Aorta (tissue), 5 donors: ENCODE measurements at regions of chr11 and their contacts with region 1.

Region 1: DNA sequence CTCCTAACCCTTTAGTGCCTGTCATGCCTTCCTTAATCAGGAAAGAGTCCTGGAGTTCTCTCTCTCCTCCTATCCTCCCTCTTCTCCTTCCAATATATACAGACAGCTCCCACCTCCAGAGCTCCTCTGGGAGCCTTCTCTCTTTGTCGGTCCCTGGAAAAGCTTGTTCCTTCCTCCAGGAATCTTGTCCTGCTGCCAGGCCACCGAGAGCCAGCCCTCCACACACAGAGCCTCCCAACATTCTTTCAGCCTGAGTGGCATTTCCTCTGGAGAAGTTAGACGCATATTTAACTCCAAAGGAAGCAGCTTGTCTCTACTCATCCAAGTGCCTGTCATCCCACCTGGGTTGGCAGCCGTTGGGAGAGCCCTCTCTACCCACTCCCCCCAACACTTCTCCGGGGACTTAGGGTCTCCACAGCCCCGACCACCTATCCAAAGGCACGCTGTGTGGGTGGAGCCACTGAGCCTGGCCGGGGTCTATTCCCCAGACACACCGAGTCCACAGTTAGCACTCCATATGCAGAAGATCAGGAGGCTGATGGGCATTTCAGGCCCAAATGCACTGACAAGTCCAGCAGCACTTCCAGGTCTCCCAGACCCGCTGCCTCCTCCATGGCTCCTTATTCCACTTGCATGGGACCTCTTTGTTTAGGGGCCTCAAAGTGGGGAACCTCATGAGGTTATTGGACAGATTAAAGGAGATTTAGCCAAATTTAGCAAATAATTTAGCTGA is 31.1 kb downstream of the DKK3 start:
- DNase-seq: peak; percentile 87 to 91
- ATAC-seq: peak; percentile 36
- H3K4me3 ChIP-seq: no peak overlapping the region
- H3K27ac ChIP-seq: peak overlapping the region; percentile 57 to 83
- H3K4me1 ChIP-seq: peaks cover 0 to 16% of the 10 kb centered on the region in 2 donors
- H3K27me3 ChIP-seq: no peaks in the 10 kb centered on the region

Region 2: DNA sequence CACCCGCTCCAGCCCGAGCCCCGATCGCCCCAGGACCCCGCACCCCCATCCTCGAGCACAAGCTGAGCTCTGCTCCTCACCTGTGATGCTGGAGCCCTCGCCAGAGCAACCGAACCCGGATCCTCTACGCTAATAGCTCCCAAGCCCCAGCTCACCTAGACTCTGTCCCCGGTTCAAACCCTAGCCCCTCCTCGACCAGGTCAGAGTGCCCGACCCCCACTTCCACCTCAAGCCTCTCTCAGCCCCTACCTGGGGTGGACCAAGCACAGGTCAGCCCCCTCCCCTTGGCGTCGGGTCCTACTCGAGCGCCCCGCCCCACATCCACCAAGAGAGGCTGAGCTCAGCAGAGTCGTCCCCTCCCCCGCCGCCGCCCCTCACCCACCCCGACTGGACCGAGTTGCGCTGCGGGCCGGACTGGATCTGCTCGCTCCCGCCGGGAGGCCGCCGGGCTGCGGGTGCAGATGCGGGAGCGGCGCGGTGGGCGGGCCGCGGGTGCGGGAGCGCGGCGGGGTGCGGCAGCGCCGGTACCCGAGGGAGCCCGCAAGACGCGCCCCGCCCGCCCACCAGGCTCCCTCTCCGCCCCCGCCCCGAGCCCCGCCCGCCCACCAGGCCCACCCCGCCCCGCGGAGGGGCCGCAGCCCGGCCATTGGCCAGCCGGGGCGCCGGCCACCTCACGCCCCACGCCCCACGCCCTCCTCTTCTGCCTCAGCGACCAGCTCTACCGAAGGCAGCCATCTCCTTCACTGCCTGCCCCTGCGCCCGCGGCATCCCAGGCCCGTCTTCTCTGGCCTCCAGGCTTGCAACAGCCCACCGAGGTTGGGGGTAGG is 31.6 kb after region 1 on chr11:
- intact Hi-C with region 1: loop called (anchors 2 to 5 kb)
- DNase-seq: peak; percentile 78 to 85
- ATAC-seq: peak; percentile 64
- H3K4me3 ChIP-seq: peak overlapping the region; percentile 75 to 80
- H3K27ac ChIP-seq: peak overlapping the region; percentile 62 to 71
- H3K4me1 ChIP-seq: peaks cover 0 to 6% of the 10 kb centered on the region in 2 donors
- H3K27me3 ChIP-seq: no peaks in the 10 kb centered on the region

Region 3: DNA sequence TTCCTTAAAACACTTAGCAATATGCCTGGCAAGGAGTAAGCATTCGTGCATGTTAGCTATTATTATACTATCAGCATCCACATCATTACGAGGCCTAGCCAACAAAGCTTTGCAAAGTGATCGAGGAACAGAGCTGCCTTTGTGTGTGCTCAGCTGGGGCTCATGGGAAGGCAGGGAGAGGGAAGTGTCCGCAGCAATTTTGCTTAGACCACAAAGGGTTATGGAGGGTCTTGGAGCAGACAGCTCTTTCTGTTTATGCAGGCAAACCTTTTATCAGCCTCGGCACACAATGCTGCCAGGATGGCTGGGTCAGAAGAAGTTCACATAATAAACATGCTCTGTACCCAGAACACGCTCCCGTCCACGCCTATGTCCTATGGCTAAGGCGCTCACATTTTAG is 42.0 kb after region 1 on chr11:
- intact Hi-C with region 1: loop called in 1 of 2 experiments (anchors 2 kb)
- DNase-seq: no peak
- ATAC-seq: peak; percentile 54
- H3K4me3 ChIP-seq: no peak overlapping the region
- H3K27ac ChIP-seq: peak overlapping the region; percentile 5 to 57
- H3K4me1 ChIP-seq: peaks cover 8 to 15% of the 10 kb centered on the region in 2 donors
- H3K27me3 ChIP-seq: no peaks in the 10 kb centered on the region